ENCODE measurements at regions of chr3 and their contacts with region 1.

Region 1: GRCh38 chr3:114290911-114291901 is 2.6 kb upstream of the TIGIT start:
- DNase-seq: peak; percentile 84
- H3K4me3 Mint-ChIP-seq: peak overlapping the region; percentile 39
- H3K27ac Mint-ChIP-seq: peak overlapping the region; percentile 80
- H3K4me1 Mint-ChIP-seq: peaks cover 5% of the 10 kb centered on the region
- H3K27me3 Mint-ChIP-seq: no peaks in the 10 kb centered on the region

Region 2: GRCh38 chr3:114176890-114177289 is 114.3 kb before region 1 on chr3:
- CTCF ChIA-PET with region 1: no interaction called
- DNase-seq: no peak
- H3K4me3 Mint-ChIP-seq: no peak overlapping the region
- H3K27ac Mint-ChIP-seq: no peak overlapping the region
- H3K4me1 Mint-ChIP-seq: no peaks in the 10 kb centered on the region
- H3K27me3 Mint-ChIP-seq: peaks cover 3% of the 10 kb centered on the region

Region 3: DNA sequence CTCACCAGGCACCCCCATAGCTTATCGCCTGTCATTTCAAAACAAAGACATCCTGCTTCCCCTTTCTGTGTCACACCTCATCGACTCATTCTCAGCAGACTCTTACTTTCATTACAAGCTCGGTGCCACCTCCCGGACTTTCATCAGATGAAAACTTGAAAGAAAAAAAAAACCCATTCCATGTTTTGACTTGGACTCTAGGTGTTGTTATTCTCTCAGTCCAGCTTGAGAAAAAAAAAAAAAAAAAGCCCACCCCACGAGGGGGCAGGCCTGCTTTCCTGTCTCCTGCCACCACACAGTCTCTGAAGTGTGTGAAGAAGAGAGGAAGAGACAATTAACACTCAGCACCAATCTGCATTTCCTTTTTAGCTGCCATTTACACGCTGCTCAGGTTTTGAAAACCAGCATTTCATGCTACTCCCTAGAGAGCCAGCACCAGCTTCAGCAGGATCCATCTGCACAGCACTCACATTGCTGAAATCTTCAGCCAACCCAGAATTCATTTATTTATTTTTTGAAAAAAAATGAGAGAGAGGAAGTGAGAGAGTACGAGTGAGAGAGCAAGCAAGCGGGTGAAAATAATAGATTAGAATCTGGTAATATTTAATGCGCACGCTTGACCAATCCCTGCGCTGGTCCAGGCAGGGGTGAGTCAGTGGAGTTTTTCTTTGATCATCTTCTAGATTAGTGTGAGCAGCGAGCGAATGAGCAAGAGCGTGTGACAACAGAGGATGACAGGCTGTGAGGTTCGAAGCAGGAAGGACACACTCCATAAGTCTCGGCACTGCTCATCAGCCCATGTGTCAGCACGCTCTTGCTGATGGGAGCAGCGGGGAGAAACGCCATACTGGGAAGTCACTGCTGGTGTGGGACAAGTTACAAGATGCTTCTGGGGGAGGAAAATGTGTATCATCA is 77.3 kb before region 1 on chr3:
- CTCF ChIA-PET with region 1: interaction called, 16 read pairs
- DNase-seq: peak; percentile 75
- H3K4me3 Mint-ChIP-seq: no peak overlapping the region
- H3K27ac Mint-ChIP-seq: no peak overlapping the region
- H3K4me1 Mint-ChIP-seq: peaks cover 2% of the 10 kb centered on the region
- H3K27me3 Mint-ChIP-seq: no peaks in the 10 kb centered on the region

Region 4: GRCh38 chr3:114307222-114307830 is 16.1 kb after region 1 on chr3:
- CTCF ChIA-PET with region 1: interaction called, 12 read pairs
- DNase-seq: no peak
- H3K4me3 Mint-ChIP-seq: no peak overlapping the region
- H3K27ac Mint-ChIP-seq: peak overlapping the region; percentile 86
- H3K4me1 Mint-ChIP-seq: peaks cover 23% of the 10 kb centered on the region
- H3K27me3 Mint-ChIP-seq: no peaks in the 10 kb centered on the region